Right ventricle myocardium superior (tissue), 1 donor: ENCODE measurements at regions of chr14 and their contacts with region 1.

Region 1: GRCh38 chr14:96424109-96424989 is 32.4 kb downstream of the AK7 start:
- DNase-seq: peak; percentile 46
- ATAC-seq: peak; percentile 94

Region 2: GRCh38 chr14:96100161-96101029 is 324.0 kb before region 1 on chr14:
- intact Hi-C with region 1: loop called (anchors 5 kb)
- DNase-seq: peak; percentile 78
- ATAC-seq: peak; percentile 59

Region 3: GRCh38 chr14:96297000-96297399 is 127.3 kb before region 1 on chr14:
- intact Hi-C with region 1: loop called (anchors 5 kb)
- DNase-seq: no peak
- ATAC-seq: no peak